ENCODE measurements at regions of chr6 and their contacts with region 1.

Region 1: DNA sequence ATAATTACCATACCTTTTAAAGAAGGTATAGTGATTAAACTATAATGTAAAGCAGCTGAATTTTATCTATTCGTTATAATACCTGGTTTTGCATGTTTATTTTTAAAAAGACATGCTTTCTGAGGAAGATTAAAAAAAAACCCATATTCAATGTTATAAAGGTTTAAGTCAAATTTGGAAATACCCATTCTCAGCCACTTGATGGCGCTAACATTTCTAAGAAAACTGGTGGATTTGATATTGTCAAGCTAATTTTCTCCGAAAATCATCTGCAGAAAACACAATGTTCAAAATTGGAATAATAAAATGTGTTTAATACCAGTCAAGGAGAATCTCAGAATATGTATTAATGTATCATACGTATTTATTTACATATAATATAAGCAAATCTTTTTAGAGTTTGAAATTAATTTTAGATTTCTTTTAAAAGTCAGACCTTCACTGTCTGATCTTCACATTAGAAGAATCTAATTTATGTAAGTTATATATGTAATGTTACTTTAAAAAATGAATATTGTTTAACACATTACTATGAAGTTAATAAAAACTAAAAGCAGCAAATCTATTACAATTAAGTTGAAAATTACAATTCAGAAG is 35.0 kb downstream of the SHPRH start:
- DNase-seq: no peak
- H3K4me3 ChIP-seq: no peak overlapping the region
- H3K27ac ChIP-seq: no peak overlapping the region
- H3K4me1 ChIP-seq: no peaks in the 10 kb centered on the region
- H3K27me3 ChIP-seq: no peaks in the 10 kb centered on the region
- CTCF ChIP-seq: peak in 2 of 3 experiments; percentile 67

Region 2: DNA sequence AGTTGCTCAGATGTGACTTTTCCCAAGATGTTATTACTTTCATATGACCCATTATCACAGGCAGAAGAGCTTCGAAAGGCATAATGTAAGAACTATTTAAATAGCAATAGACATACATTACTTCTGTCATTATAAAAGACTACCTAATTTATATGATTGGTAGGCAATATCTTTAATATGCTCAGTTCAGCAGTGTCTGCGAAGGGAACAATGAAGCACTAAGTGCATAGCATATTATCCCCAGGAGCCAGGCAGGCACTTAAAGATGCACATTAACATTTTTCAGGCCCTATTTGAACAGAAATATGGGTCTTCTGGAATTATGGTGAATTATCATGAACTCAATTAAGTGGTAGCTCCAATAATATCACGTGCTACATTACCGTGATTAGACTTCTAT is 411.6 kb before region 1 on chr6:
- intact Hi-C with region 1: no loop called
- DNase-seq: no peak
- H3K4me3 ChIP-seq: no peak overlapping the region
- H3K27ac ChIP-seq: no peak overlapping the region
- H3K4me1 ChIP-seq: no peaks in the 10 kb centered on the region
- H3K27me3 ChIP-seq: no peaks in the 10 kb centered on the region
- CTCF ChIP-seq: no peak

Region 3: DNA sequence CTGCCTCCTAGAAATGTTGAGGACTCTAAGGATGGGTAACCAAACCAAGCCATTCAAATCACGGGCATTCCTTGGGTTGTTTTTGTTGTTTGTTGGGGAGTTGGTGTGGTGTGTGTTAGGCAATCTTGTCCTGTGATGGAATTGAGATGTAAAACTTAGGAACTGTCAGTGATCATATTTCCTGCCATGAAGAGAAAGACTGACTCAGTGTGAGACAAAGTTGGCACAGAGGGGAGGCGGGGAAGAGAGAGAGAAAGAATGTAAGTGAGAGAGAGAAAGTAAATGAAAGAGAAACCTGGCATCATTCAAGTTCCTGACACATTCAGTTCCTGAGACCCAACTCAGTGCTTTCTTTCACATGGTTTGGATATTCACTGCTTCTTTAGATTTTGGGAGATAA is 93.0 kb before region 1 on chr6:
- intact Hi-C with region 1: no loop called
- DNase-seq: no peak
- H3K4me3 ChIP-seq: no peak overlapping the region
- H3K27ac ChIP-seq: no peak overlapping the region
- H3K4me1 ChIP-seq: no peaks in the 10 kb centered on the region
- H3K27me3 ChIP-seq: no peaks in the 10 kb centered on the region
- CTCF ChIP-seq: no peak

Region 4: GRCh38 chr6:146481527-146481926 is 552.4 kb after region 1 on chr6:
- intact Hi-C with region 1: no loop called
- DNase-seq: no peak
- H3K4me3 ChIP-seq: no peak overlapping the region
- H3K27ac ChIP-seq: no peak overlapping the region
- H3K4me1 ChIP-seq: no peaks in the 10 kb centered on the region
- H3K27me3 ChIP-seq: no peaks in the 10 kb centered on the region
- CTCF ChIP-seq: no peak

Region 5: GRCh38 chr6:146700078-146700686 is 771.0 kb after region 1 on chr6:
- intact Hi-C with region 1: loop called (anchors 2 kb)
- DNase-seq: peak in 1 of 2 donors; percentile 82
- H3K4me3 ChIP-seq: no peak overlapping the region
- H3K27ac ChIP-seq: no peak overlapping the region
- H3K4me1 ChIP-seq: no peaks in the 10 kb centered on the region
- H3K27me3 ChIP-seq: no peaks in the 10 kb centered on the region
- CTCF ChIP-seq: peak; percentile 44 to 73 (median 68)